ENCODE measurements at regions of chr19 and their contacts with region 1.

Region 1: GRCh38 chr19:48646001-48646721 is at the start of gene CA11:
- DNase-seq: peak; percentile 92 to 93
- H3K4me3 ChIP-seq: peak within 1 kb of the TSS; percentile 51 to 77
- H3K27ac ChIP-seq: peak within 1 kb of the TSS; percentile 97 to 99
- H3K4me1 ChIP-seq: peaks cover 0 to 6% of the 10 kb centered on the region in 2 donors
- H3K27me3 ChIP-seq: no peaks in the 10 kb centered on the region
- CTCF ChIP-seq: peak; percentile 91 to 98 (median 94)
- POLR2A ChIP-seq: peak; percentile 20 to 59
- total RNA-seq, gene CA11: 0.51 to 55.1 (median 8.1) TPM

Region 2: DNA sequence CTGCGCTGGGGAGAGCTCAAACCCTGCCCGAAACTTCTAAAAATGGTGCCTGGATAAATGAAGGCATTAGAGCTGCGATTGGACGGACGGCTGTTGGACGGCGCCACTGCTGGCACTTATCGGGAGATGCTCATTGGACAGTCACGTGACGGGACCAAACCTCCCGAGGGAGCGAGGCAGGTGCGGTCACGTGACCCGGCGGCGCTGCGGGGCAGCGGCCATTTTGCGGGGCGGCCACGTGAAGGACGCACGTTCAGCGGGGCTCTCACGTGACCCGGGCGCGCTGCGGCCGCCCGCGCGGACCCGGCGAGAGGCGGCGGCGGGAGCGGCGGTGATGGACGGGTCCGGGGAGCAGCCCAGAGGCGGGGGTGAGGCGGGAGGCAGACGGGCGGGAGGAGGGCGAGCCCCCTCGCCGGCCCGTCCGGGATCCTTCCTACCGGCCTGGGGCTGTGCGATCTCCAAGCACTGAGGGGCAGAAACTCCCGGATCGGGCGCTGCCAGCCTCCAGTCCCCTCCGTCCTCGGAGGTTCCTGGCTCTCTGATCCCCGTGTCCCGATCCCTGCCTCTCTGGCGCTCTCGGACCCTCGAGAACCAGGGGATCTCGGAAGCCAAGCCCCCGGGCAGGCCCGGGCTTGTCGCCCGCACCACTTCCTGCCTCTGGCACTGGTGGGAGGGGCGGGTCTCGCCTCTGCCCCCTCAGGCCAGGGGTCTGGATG is 308.6 kb after region 1 on chr19 and contains the start of gene BAX:
- intact Hi-C with region 1: loop called (anchors 10 kb)
- DNase-seq: peak; percentile 94 to 96
- H3K4me3 ChIP-seq: peak within 1 kb of the TSS; percentile 63
- H3K27ac ChIP-seq: peak within 1 kb of the TSS; percentile 76 to 83
- H3K4me1 ChIP-seq: peaks cover 0 to 4% of the 10 kb centered on the region in 2 donors
- H3K27me3 ChIP-seq: no peaks in the 10 kb centered on the region
- CTCF ChIP-seq: peak in 1 of 4 experiments; percentile 43
- POLR2A ChIP-seq: peak; percentile 85 to 86
- total RNA-seq, gene BAX: 16.5 to 84.5 (median 39.5) TPM